Calu3 (cell line): ENCODE measurements at regions of chr5 and their contacts with region 1.

Region 1: GRCh38 chr5:78964887-78965286 is 20.2 kb downstream of the ARSB start:
- DNase-seq: peak; percentile 27
- H3K4me3 Mint-ChIP-seq: no peak overlapping the region
- H3K27ac Mint-ChIP-seq: no peak overlapping the region
- H3K4me1 Mint-ChIP-seq: no peaks in the 10 kb centered on the region
- H3K27me3 Mint-ChIP-seq: no peaks in the 10 kb centered on the region
- CTCF ChIP-seq: no peak

Region 2: GRCh38 chr5:78899922-78900362 is 64.9 kb before region 1 on chr5:
- CTCF ChIA-PET with region 1: interaction called, 10 read pairs
- intact Hi-C with region 1: loop called (anchors 1 kb)
- DNase-seq: peak; percentile 65
- H3K4me3 Mint-ChIP-seq: no peak overlapping the region
- H3K27ac Mint-ChIP-seq: no peak overlapping the region
- H3K4me1 Mint-ChIP-seq: peaks cover 1% of the 10 kb centered on the region
- H3K27me3 Mint-ChIP-seq: no peaks in the 10 kb centered on the region
- CTCF ChIP-seq: peak; percentile 92

Region 3: DNA sequence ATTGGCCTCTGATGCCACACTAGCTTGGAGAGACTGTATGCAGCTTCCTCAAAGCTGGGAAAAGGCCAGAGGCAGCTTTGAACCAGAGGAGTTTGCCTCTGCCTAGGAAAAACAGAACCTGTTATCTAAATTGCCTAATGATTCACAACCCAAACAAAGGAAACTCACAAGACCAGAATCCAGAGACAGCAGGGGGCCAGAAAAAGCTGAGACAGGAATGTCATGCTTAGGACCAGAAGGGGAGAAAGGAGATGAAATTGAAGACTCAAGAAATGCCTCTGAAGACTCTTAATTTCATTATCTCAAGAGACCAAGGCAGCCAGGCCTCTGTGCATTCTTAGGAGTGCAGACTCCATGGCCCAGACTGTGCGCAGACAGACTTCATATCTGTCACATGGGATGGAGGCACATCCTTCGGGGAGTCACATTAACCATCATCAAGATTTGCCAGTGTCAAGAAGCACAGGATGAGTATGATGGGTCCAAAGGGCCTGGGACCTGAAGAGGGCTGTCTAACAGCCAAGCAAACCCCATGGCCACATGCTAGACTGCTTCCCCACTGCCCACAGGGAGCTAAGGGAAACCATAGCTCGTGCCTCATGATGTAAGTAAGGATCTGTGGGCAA is 37.1 kb before region 1 on chr5:
- CTCF ChIA-PET with region 1: no interaction called
- intact Hi-C with region 1: loop called (anchors 5 kb)
- DNase-seq: peak; percentile 44
- H3K4me3 Mint-ChIP-seq: no peak overlapping the region
- H3K27ac Mint-ChIP-seq: peak overlapping the region; percentile 38
- H3K4me1 Mint-ChIP-seq: peaks cover 19% of the 10 kb centered on the region
- H3K27me3 Mint-ChIP-seq: no peaks in the 10 kb centered on the region
- CTCF ChIP-seq: no peak

Region 4: DNA sequence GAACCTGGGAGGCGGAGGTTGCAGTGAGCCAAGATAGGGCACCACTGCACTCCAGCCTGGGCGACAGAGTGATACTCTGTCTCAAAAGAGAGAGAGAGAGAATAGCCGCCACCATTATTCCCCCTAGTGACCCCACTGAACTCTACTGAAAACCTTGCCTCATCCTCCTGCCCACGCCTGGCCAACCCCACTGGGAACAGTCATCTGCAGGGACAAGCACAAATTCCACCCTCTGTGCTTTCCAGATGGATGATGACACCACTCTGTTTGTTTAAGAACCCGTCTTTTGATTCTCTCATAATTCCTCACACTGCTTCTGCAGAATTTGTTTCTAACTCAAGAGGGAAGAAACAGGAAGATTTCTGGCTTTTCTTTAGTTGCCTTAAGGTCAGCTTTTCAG is 116.9 kb after region 1 on chr5:
- CTCF ChIA-PET with region 1: no interaction called
- intact Hi-C with region 1: no loop called
- DNase-seq: no peak
- H3K4me3 Mint-ChIP-seq: no peak overlapping the region
- H3K27ac Mint-ChIP-seq: no peak overlapping the region
- H3K4me1 Mint-ChIP-seq: no peaks in the 10 kb centered on the region
- H3K27me3 Mint-ChIP-seq: no peaks in the 10 kb centered on the region
- CTCF ChIP-seq: no peak